PC-9 (cell line): ENCODE measurements at regions of chr5 and their contacts with region 1.

Region 1: GRCh38 chr5:134917070-134917815 is 12.3 kb downstream of the PCBD2 start:
- DNase-seq: no peak
- H3K4me3 ChIP-seq: no peak overlapping the region
- H3K27ac ChIP-seq: no peak overlapping the region
- H3K4me1 ChIP-seq: no peaks in the 10 kb centered on the region
- H3K27me3 ChIP-seq: no peaks in the 10 kb centered on the region
- CTCF ChIP-seq: peak; percentile 64

Region 2: GRCh38 chr5:134833340-134834032 is 83.8 kb before region 1 on chr5:
- CTCF ChIA-PET with region 1: no interaction called
- POLR2A ChIA-PET with region 1: interaction called, 22 read pairs
- intact Hi-C with region 1: no loop called
- DNase-seq: no peak
- H3K4me3 ChIP-seq: no peak overlapping the region
- H3K27ac ChIP-seq: no peak overlapping the region
- H3K4me1 ChIP-seq: no peaks in the 10 kb centered on the region
- H3K27me3 ChIP-seq: no peaks in the 10 kb centered on the region
- CTCF ChIP-seq: no peak

Region 3: GRCh38 chr5:134982230-134982629 is 65.0 kb after region 1 on chr5:
- CTCF ChIA-PET with region 1: no interaction called
- POLR2A ChIA-PET with region 1: no interaction called
- intact Hi-C with region 1: no loop called
- DNase-seq: no peak
- H3K4me3 ChIP-seq: no peak overlapping the region
- H3K27ac ChIP-seq: no peak overlapping the region
- H3K4me1 ChIP-seq: no peaks in the 10 kb centered on the region
- H3K27me3 ChIP-seq: no peaks in the 10 kb centered on the region
- CTCF ChIP-seq: no peak

Region 4: GRCh38 chr5:135133698-135134515 is 216.7 kb after region 1 on chr5:
- CTCF ChIA-PET with region 1: no interaction called
- POLR2A ChIA-PET with region 1: no interaction called
- intact Hi-C with region 1: loop called (anchors 1 kb)
- DNase-seq: peak; percentile 65 to 73
- H3K4me3 ChIP-seq: no peak overlapping the region
- H3K27ac ChIP-seq: no peak overlapping the region
- H3K4me1 ChIP-seq: peaks cover 68% of the 10 kb centered on the region
- H3K27me3 ChIP-seq: no peaks in the 10 kb centered on the region
- CTCF ChIP-seq: no peak

Region 5: DNA sequence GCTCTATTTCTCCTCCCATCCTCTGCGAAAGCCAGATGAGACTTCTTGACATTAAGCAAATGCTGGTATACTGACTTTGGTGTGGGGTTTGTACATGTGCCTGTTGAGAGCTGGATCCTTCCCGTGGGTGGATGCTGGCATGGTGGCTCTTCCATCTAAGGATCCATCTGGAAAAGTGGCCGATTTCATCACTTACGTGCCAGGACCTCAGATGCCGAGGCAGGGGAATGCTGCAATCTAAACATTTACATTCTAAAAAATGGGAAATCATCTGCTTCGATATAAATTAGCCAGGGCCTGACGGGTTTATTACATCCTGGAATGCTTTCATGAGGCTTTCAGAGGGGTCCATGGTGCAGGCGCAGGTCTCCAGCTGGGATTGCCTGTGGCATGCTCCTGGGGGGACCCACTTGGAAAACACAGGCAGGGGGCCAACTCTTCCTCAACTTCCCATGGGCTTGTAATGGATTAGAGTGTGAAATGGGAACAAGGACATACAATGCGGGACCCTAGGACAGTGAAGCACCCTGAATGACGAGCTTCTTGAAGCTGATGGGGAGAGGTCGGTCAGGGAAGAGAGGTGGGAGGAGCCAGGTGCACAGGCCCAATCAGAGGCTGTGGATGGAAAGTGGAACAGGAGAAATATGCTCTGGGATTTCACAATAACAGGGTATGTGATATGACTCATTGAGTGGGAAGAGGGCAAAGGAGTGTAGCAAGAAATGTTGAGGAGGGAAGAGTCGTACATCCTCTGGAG is 222.3 kb after region 1 on chr5:
- CTCF ChIA-PET with region 1: no interaction called
- POLR2A ChIA-PET with region 1: interaction called, 13 read pairs
- intact Hi-C with region 1: loop called (anchors 1 kb)
- DNase-seq: peak; percentile 70 to 93
- H3K4me3 ChIP-seq: peak overlapping the region; percentile 43; the same call in 1 of the 2 replicates
- H3K27ac ChIP-seq: peak overlapping the region; percentile 97
- H3K4me1 ChIP-seq: peaks cover 85% of the 10 kb centered on the region
- H3K27me3 ChIP-seq: no peaks in the 10 kb centered on the region
- CTCF ChIP-seq: no peak

Region 6: DNA sequence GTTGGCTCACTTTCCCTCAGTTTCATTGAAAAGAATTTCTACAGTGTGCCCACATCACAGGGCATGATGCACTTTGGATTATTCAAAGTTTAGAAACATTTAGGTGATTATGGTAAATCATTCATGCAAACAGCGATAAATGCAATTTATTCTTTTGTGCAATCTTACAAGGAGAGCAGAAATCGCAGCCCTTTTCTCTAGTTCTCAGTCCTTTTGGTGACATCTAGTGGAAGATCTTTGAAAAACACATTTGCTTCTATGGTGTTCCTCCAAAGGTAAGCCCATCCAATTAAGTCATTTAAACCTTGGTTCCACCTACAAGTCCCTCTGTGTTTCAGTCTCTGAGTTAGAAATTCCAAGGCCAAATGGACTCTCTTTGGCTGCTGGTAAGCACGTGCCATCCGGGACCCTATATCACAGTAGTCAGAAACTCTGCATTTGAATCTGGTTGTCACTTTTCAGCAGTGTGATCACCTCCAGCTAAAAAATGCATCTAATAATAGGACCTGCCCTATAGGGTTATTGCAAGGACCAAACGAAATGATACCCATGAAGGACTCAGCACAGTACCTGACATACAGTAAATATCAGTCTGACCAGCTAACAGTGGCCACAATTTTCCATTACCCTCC is 415.4 kb after region 1 on chr5:
- CTCF ChIA-PET with region 1: no interaction called
- POLR2A ChIA-PET with region 1: no interaction called
- intact Hi-C with region 1: loop called (anchors 10 kb)
- DNase-seq: peak in 1 of 2 experiments; percentile 69
- H3K4me3 ChIP-seq: no peak overlapping the region
- H3K27ac ChIP-seq: no peak overlapping the region
- H3K4me1 ChIP-seq: no peaks in the 10 kb centered on the region
- H3K27me3 ChIP-seq: no peaks in the 10 kb centered on the region
- CTCF ChIP-seq: peak; percentile 75